Vagina (tissue), 2 donors: ENCODE measurements at regions of chr1 and their contacts with region 1.

Region 1: GRCh38 chr1:9874959-9875635 is 35.0 kb downstream of the CTNNBIP1 start:
- DNase-seq: no peak
- H3K4me3 ChIP-seq: peak overlapping the region in 1 of 2 donors; percentile 18
- H3K27ac ChIP-seq: peak overlapping the region; percentile 8
- H3K4me1 ChIP-seq: peaks cover 38% of the 10 kb centered on the region
- H3K27me3 ChIP-seq: no peaks in the 10 kb centered on the region
- CTCF ChIP-seq: peak; percentile 86 to 93 (median 88)
- POLR2A ChIP-seq: no peak

Region 2: DNA sequence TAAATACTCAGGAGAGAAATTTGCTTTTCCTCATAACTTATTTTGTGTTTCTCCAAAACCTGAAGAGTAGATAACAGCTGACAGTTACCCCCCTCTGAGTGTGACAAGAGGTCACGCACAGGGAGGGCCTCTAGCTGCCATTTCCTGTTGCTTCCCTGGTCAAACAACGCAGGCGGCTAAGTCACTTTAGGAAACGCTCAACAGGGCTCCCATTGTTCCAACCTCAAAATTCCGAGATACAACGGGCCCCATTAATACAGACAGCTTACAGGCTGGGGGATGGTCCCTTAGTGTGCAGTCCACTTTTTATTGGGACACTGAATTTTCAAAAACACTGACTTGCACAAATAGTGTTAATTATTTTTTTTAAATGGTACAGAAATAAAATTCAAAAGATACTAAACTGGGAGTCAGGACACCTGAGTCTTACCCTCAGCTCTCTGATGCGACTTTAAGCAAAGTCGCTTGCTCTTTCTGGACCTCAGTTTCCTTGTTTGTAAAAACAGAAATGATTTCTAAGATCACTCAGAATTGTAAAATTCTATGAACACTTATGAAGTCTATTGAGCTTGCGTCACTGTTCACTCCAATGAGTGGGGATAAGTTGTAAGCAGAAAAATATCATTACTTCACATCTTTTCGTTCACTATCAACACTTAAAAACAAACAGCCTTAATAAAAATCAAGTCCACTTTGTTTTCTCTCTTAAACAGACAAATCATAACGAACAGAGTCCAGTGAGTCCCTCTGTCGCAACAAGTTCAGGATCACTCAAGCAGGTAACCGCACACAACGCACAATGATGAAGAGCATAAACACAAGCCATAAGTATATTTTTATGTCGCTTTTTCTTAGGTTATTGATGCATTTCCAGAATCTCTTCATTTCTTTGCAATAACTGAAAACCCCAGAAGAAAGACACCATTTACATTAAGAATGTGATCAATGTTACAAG is 54.6 kb after region 1 on chr1:
- intact Hi-C with region 1: loop called (anchors 10 kb)
- DNase-seq: no peak
- H3K4me3 ChIP-seq: no peak overlapping the region
- H3K27ac ChIP-seq: no peak overlapping the region
- H3K4me1 ChIP-seq: no peaks in the 10 kb centered on the region
- H3K27me3 ChIP-seq: no peaks in the 10 kb centered on the region
- CTCF ChIP-seq: no peak
- POLR2A ChIP-seq: no peak